K562 (cell line): ENCODE measurements at regions of chr6 and their contacts with region 1.

Region 1: GRCh38 chr6:39309942-39310531 is 4.2 kb downstream of the KCNK17 start:
- DNase-seq: peak; percentile 83 to 91 (median 89)
- ATAC-seq: peak; percentile 95
- H3K4me3 ChIP-seq: no peak overlapping the region
- H3K27ac ChIP-seq: no peak overlapping the region
- H3K4me1 ChIP-seq: peaks cover 0 to 13% of the 10 kb centered on the region in 2 experiments; a peak in 1 of 5 replicates
- H3K27me3 ChIP-seq: peaks cover 3 to 57% of the 10 kb centered on the region in 2 experiments; a peak in 4 of 5 replicates
- CTCF ChIP-seq: peak; percentile 92 to 97 (median 97)
- EP300 ChIP-seq: no peak
- POLR2A ChIP-seq: no peak
- RAD21 ChIP-seq: peak; percentile 96 to 98

Region 2: DNA sequence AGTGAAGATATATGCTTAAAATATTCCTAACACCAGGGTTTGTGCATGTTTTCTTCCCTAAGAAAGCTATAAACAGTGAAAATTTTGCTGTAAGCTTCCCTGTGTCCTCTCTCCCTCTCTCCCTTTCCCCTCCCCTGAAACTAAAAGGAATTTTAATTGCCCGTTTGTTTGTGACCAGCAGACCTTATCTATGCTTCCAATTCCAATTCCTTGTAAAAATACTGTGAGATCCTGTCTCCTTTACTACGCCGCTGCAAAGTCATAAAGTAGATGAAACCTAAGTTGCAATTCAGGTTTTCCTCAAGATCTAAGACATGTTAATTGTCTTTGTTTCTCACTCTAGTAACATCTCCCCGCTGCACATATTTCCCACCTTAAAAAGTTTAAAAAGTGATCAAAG is 512.6 kb before region 1 on chr6:
- CTCF ChIA-PET with region 1: no interaction called
- POLR2A ChIA-PET with region 1: no interaction called
- in situ Hi-C with region 1: no loop called
- intact Hi-C with region 1: no loop called
- DNase-seq: no peak
- ATAC-seq: no peak
- H3K4me3 ChIP-seq: no peak overlapping the region
- H3K27ac ChIP-seq: no peak overlapping the region
- H3K4me1 ChIP-seq: peaks cover 8 to 20% of the 10 kb centered on the region in 2 experiments
- H3K27me3 ChIP-seq: no peaks in the 10 kb centered on the region
- CTCF ChIP-seq: no peak
- EP300 ChIP-seq: no peak
- POLR2A ChIP-seq: no peak
- RAD21 ChIP-seq: no peak

Region 3: DNA sequence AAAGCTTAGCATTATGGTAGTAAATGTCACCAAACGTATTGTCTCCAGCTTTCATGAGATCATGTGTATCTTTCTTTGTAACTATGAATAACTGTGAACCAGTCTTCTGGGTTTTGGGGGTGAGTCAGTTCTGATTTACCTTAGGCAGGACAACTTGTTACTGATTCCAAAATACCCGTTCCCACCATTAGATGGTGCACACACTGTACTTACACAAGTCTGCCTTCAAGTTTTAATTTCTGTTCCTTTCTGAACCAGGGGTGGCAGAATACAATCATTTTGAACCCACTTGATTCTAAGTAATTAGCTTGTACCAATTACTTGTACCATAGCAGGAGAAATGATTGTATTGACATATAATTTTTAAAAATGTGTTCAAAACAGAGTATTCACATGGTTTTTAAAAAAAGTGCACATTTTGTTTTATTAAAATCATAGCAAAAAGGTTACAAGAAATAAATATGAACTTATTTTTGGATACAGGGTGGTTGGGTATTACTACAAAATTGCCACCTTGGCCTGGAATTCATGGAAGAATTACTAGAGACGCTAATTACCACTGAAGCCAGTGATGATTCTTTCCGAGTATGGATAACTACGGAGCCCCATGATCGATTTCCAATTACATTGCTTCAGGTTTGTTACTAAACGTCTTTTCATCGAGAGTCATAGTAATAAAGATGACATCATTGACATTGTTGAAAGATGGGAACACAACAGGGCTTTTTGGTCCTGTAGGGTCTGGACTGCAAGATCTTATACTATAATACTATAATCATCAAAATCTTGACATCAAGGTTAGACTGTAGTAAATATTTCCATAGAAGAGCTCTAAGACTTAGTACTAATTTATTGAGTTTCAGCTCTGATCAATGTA is 336.6 kb before region 1 on chr6:
- CTCF ChIA-PET with region 1: interaction called, 5 read pairs
- POLR2A ChIA-PET with region 1: no interaction called
- in situ Hi-C with region 1: no loop called
- intact Hi-C with region 1: loop called (anchors 1 kb)
- DNase-seq: peak; percentile 58 to 78 (median 65)
- ATAC-seq: peak; percentile 97
- H3K4me3 ChIP-seq: no peak overlapping the region
- H3K27ac ChIP-seq: no peak overlapping the region
- H3K4me1 ChIP-seq: peaks cover 0 to 4% of the 10 kb centered on the region in 2 experiments; a peak in 2 of 5 replicates
- H3K27me3 ChIP-seq: peaks cover 0 to 6% of the 10 kb centered on the region in 2 experiments; a peak in 2 of 5 replicates
- CTCF ChIP-seq: peak; percentile 81 to 99 (median 97)
- EP300 ChIP-seq: no peak
- POLR2A ChIP-seq: no peak
- RAD21 ChIP-seq: peak; percentile 77 to 88

Region 4: DNA sequence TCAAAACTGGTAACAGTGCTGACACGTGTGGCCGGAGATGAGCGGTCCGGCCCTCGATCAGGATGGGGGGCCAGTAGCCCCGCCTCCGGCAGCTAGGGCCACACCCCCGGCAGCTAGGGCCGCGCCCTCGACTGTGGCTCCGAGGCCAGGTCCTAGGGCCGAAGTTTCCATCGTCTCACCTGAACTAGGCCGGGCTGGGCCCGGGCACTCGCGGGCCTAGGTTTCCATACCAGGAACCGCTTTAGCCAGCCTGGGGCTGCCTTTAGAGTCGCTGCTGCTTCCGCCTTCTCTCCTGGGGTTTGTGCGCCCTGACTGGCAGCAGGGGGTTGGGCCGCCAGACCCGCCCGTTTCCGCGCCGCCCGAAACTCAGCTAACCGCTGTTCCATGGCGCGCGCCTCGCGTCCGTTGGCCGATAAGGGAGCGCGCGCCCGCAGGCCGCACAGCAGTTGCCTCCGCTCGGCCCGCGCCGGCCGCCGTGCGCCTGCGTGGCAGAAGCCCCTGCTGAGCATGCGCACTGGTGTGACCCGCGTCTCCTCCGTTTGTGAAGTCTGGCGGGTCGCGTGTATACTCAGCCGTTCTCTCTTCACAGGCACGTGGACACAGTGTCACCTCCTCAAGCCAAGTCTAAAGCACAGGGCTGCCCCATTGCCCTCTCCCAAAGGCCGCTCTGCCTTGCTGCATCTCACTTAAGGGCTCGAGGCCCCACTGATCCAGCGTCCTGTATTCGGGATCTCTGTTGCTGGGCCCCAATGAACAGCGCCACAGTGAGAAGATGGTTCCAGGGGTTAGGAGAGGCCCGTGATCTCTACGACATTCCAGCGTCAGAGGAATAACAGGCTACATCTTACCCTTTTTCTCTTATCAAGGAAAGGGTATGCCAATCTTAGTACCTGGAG is 195.1 kb before region 1 on chr6 and contains the start of gene SAYSD1:
- CTCF ChIA-PET with region 1: no interaction called
- POLR2A ChIA-PET with region 1: no interaction called
- in situ Hi-C with region 1: no loop called
- intact Hi-C with region 1: no loop called
- DNase-seq: peak; percentile 96 to 99 (median 98)
- ATAC-seq: peak; percentile 99
- H3K4me3 ChIP-seq: peak within 1 kb of the TSS; percentile 55
- H3K27ac ChIP-seq: peak within 1 kb of the TSS; percentile 87
- H3K4me1 ChIP-seq: peaks cover 6 to 10% of the 10 kb centered on the region in 2 experiments; a peak in 4 of 5 replicates
- H3K27me3 ChIP-seq: peaks cover 0 to 7% of the 10 kb centered on the region in 2 experiments; a peak in 3 of 5 replicates
- CTCF ChIP-seq: no peak
- EP300 ChIP-seq: peak; percentile 78
- POLR2A ChIP-seq: peak; percentile 95
- RAD21 ChIP-seq: no peak
- polyA plus RNA-seq, gene SAYSD1: 3.5 to 4.2 TPM

Region 5: GRCh38 chr6:39166189-39166911 is 143.7 kb before region 1 on chr6:
- CTCF ChIA-PET with region 1: interaction called, 52 read pairs
- POLR2A ChIA-PET with region 1: interaction called, 3 read pairs
- in situ Hi-C with region 1: no loop called
- intact Hi-C with region 1: loop called (anchors 2 kb)
- DNase-seq: peak; percentile 89 to 95 (median 92)
- ATAC-seq: peak; percentile 99
- H3K4me3 ChIP-seq: no peak overlapping the region
- H3K27ac ChIP-seq: no peak overlapping the region
- H3K4me1 ChIP-seq: no peaks in the 10 kb centered on the region
- H3K27me3 ChIP-seq: no peaks in the 10 kb centered on the region; a peak in 2 of 5 replicates
- CTCF ChIP-seq: peak; percentile 97
- EP300 ChIP-seq: no peak
- POLR2A ChIP-seq: no peak
- RAD21 ChIP-seq: peak; percentile 98 to 100